AG04449 (cell line): ENCODE measurements at regions of chr9 and their contacts with region 1.

Region 1: GRCh38 chr9:4315582-4316215 is 15.8 kb upstream of the GLIS3 start:
- DNase-seq: no peak
- H3K4me3 ChIP-seq: no peak overlapping the region
- CTCF ChIP-seq: peak; percentile 96

Region 2: GRCh38 chr9:3857673-3858072 is 458.0 kb before region 1 on chr9:
- CTCF ChIA-PET with region 1: no interaction called
- POLR2A ChIA-PET with region 1: no interaction called
- DNase-seq: no peak
- H3K4me3 ChIP-seq: no peak overlapping the region
- CTCF ChIP-seq: no peak

Region 3: DNA sequence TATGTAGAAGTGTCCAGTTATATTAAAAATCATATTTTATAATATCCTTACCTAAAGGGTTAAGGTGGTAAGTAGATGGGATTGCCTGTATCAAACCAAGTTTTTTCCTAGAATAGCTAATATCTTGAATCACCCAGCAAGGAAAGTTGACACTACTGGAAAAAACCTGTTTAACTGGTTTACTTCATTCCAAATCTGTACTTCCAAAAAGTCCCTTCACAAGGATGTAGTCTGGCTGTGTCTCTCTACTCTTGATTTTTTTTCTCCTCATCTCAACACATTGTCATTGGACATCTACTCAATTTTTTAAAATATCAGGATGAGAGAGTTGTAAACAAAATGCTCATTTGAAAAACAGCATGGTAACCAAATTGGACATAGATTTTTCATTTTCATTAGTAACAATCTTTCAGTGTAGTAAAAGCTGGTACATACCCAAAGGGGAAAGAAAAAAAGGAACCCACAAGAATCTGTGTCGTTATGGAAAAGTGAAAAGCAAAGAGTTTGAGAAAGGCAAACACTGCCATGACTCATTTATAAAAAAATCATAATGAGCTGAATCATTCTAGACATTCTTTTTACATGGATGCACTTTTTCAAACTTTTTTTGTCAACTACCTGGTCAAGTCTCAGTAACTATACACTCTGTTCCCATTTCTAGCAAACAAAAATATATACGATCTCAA is 189.4 kb before region 1 on chr9:
- CTCF ChIA-PET with region 1: no interaction called
- POLR2A ChIA-PET with region 1: no interaction called
- DNase-seq: no peak
- H3K4me3 ChIP-seq: no peak overlapping the region
- CTCF ChIP-seq: no peak

Region 4: GRCh38 chr9:4280605-4281004 is 35.1 kb before region 1 on chr9:
- CTCF ChIA-PET with region 1: no interaction called
- POLR2A ChIA-PET with region 1: no interaction called
- DNase-seq: no peak
- H3K4me3 ChIP-seq: no peak overlapping the region
- CTCF ChIP-seq: no peak

Region 5: GRCh38 chr9:4297151-4297785 is 18.4 kb before region 1 on chr9:
- CTCF ChIA-PET with region 1: interaction called, 109 read pairs
- POLR2A ChIA-PET with region 1: interaction called, 4 read pairs
- DNase-seq: no peak
- H3K4me3 ChIP-seq: peak overlapping the region; percentile 84
- CTCF ChIP-seq: peak; percentile 58

Region 6: GRCh38 chr9:4327504-4328191 is 11.9 kb after region 1 on chr9:
- CTCF ChIA-PET with region 1: interaction called, 160 read pairs
- POLR2A ChIA-PET with region 1: no interaction called
- DNase-seq: no peak
- H3K4me3 ChIP-seq: no peak overlapping the region
- CTCF ChIP-seq: no peak

Region 7: DNA sequence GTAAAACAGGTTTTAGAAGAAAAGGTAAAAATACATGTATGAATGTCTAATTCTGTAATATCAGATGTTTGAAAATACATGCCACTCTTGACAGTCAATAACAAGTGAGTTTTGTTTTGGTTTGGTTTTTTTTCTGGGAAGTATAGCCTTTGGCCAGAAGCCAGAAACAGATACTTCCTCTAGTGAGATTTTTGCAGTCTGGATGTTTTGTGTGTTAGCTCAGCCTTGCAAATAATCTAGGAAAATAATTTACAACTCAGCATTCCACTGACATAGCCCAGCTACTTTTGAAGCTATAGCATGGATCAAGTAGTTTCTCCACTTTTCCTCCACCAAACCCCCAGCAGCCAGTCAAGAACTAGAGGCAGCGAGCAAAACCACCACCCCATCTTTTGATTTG is 231.3 kb after region 1 on chr9:
- CTCF ChIA-PET with region 1: no interaction called
- POLR2A ChIA-PET with region 1: no interaction called
- DNase-seq: peak; percentile 36
- H3K4me3 ChIP-seq: no peak overlapping the region
- CTCF ChIP-seq: no peak